ENCODE measurements at regions of chr12 and their contacts with region 1.

Region 1: DNA sequence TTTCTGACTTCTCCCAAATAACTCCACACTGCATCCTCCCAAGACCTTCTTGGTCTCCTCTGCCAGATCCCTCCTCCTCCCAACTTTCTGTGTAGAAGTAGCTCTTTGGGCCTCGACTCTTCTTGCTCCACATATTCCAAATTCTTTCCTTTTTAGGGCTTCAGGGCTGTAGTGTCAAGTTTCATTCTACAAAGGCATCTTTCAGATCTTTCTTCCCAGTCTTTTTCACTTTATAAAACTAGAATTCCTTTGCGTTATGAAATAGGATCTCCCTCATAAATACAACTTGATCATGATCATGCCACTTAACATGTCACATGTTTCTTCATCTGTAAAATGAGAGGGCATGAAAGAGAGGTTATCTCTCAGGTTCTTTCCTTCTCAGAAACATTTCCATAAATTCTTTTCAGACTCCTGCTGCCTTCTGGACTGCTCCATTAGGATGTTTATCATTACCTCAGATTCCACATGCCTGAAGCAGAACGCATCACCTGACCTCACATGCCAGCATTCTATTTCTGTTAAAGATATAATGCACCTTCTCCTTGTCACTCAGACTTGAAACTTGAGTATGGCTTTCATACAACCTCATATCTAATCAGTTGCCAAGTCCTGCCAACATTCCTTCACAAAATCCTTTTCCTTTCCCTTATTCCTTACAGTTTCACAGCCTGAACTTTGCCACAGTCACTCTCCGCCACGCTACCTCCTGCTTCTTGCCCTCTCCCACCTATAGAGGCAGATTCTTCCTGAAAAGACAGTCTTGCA is 8.5 kb downstream of the SLC38A1 start:
- DNase-seq: no peak
- H3K4me3 ChIP-seq: peak overlapping the region in 2 of 4 donors; percentile 0 to 17
- H3K27ac ChIP-seq: peak overlapping the region; percentile 73 to 86 (median 77)
- H3K4me1 ChIP-seq: peaks cover 57 to 93% (median 88%) of the 10 kb centered on the region in 4 donors
- H3K27me3 ChIP-seq: no peaks in the 10 kb centered on the region
- CTCF ChIP-seq: no peak
- EP300 ChIP-seq: no peak
- POLR2A ChIP-seq: no peak

Region 2: GRCh38 chr12:46147144-46147543 is 113.2 kb before region 1 on chr12:
- intact Hi-C with region 1: no loop called
- DNase-seq: no peak
- H3K4me3 ChIP-seq: no peak overlapping the region
- H3K27ac ChIP-seq: no peak overlapping the region
- H3K4me1 ChIP-seq: peaks cover 0 to 12% (median 9%) of the 10 kb centered on the region in 4 donors
- H3K27me3 ChIP-seq: no peaks in the 10 kb centered on the region
- CTCF ChIP-seq: no peak
- EP300 ChIP-seq: no peak
- POLR2A ChIP-seq: no peak

Region 3: GRCh38 chr12:46219884-46220655 is 40.3 kb before region 1 on chr12:
- intact Hi-C with region 1: loop called (anchors 5 kb)
- DNase-seq: no peak
- H3K4me3 ChIP-seq: no peak overlapping the region
- H3K27ac ChIP-seq: peak overlapping the region; percentile 68 to 82 (median 78)
- H3K4me1 ChIP-seq: peaks cover 54 to 100% (median 98%) of the 10 kb centered on the region in 4 donors
- H3K27me3 ChIP-seq: no peaks in the 10 kb centered on the region
- CTCF ChIP-seq: no peak
- EP300 ChIP-seq: no peak
- POLR2A ChIP-seq: no peak

Measured in esophagus muscularis mucosa (tissue), 4 donors.